Common myeloid progenitor, CD34-positive (primary cell): ENCODE measurements at regions of chr3 and their contacts with region 1.

Region 1: GRCh38 chr3:58008140-58009025 is at the start of gene FLNB:
- DNase-seq: peak; percentile 63 to 80 (median 79)
- H3K4me3 ChIP-seq: peak within 1 kb of the TSS; percentile 58 to 100 (median 96)
- H3K27ac ChIP-seq: peak within 1 kb of the TSS in 1 of 2 experiments; percentile 60
- H3K4me1 ChIP-seq: peaks cover 4 to 38% (median 28%) of the 10 kb centered on the region in 4 experiments
- H3K27me3 ChIP-seq: no peaks in the 10 kb centered on the region

Region 2: DNA sequence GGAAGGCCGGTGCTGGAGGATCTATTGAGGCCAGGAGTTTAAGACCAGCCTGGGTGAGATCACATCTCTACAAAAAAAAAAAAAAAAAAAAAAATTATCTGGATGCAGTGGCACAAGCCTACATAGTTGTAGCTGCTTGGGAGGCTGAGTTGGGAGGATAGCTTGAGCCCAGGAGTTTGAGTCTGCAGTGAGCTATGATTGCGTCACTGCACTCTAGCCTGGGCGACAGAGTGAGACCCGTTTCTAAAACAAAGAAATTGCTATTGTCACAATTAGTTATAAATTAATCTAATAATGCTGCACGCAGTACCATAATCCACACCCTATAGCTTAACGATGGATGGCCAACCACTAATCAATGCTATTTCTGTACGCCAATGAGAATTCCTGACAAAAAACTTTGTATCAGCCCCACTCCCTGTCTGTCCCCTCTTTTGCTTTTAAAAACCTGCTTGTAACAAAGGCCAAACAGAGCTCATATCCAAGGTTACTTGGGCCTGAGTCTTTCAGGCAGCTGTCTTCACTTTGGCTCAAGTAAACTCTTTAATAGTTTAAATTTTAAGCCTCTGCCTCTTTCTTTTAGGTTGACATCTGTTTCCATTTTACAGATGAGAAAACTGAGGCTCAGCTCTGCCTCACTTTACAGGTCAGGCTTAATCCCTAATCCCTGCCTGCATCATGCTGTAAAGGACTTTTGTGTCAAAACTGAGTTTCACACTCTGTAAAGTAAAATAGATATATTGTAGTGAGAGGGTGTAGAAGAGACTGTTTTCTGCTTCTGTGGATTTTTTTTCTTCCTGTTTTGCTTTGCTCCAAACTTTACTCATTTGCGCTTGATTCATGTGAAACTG is 10.7 kb after region 1 on chr3:
- CTCF ChIA-PET with region 1: interaction called, 10 read pairs
- POLR2A ChIA-PET with region 1: interaction called, 4 read pairs
- DNase-seq: no peak
- H3K4me3 ChIP-seq: no peak overlapping the region
- H3K27ac ChIP-seq: no peak overlapping the region
- H3K4me1 ChIP-seq: peaks cover 0 to 11% (median 6%) of the 10 kb centered on the region in 4 experiments
- H3K27me3 ChIP-seq: no peaks in the 10 kb centered on the region

Region 3: GRCh38 chr3:58177747-58178527 is 169.6 kb after region 1 on chr3:
- CTCF ChIA-PET with region 1: interaction called, 18 read pairs
- POLR2A ChIA-PET with region 1: no interaction called
- DNase-seq: peak; percentile 88 to 92 (median 91)
- H3K4me3 ChIP-seq: peak overlapping the region in 6 of 7 experiments; percentile 35 to 77 (median 57)
- H3K27ac ChIP-seq: no peak overlapping the region
- H3K4me1 ChIP-seq: peaks cover 0 to 36% (median 34%) of the 10 kb centered on the region in 4 experiments
- H3K27me3 ChIP-seq: peaks cover 0 to 2% (median 0%) of the 10 kb centered on the region in 5 experiments